ENCODE measurements at regions of chr12 and their contacts with region 1.

Region 1: DNA sequence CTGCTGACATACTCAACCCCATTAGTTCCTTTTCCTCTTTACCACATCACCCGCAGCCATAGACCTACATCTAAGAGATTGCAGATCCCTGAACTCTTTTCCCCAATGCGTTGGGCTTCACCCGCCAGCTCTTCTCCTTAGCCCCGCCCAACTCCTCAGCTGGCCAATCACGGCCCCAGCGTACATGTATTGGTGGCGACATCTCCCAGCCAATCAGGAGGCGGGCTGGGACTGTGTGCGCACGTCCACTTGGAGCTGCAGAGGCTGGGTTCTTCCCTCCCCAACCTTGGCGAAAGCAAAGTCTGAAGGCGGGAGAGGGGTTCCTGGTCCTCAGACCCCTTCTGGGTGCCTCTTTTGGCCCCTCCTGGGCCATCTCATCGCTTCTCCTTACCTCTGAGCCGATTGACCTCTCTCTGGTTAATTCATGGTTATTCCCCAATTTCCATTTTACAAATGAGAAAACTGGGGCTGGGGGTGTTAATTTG is 11.0 kb downstream of the PDE1B start:
- DNase-seq: peak; percentile 78
- ATAC-seq: peak; percentile 100
- H3K4me3 Mint-ChIP-seq: peak overlapping the region; percentile 86
- H3K27ac Mint-ChIP-seq: peak overlapping the region; percentile 91
- H3K4me1 Mint-ChIP-seq: peaks cover 32% of the 10 kb centered on the region
- H3K27me3 Mint-ChIP-seq: no peaks in the 10 kb centered on the region

Region 2: DNA sequence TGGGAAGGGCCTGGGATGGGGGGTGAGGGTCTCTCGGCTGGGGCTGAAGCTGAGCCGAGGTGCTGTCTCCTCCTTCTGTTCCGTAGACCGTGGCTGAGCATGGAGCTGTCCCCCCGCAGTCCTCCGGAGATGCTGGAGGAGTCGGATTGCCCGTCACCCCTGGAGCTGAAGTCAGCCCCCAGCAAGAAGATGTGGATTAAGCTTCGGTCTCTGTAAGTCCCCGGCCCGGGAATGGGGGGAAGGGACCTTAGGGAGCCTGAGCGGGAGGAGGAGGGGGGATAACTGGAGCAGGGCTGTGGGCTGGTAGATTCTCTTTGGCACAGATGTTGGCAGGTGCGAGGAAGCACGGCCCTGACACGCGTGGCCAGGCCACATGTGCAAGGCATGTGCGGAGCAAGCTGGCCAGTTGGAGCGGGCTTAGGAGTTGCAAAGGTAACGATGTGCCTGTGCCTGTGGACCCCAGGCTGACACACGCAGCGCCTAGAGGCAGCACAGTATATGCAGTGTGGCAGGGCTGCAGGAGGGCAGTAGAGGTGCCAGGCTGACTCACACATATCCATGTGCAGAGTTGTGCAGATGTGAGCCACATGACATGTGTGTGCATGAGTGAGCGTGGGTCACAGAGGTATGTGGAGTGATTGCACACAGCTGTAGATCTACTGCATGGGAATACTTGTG is 10.5 kb before region 1 on chr12:
- POLR2A ChIA-PET with region 1: interaction called, 26 read pairs
- DNase-seq: peak; percentile 43
- ATAC-seq: peak; percentile 32
- H3K4me3 Mint-ChIP-seq: peak overlapping the region; percentile 83
- H3K27ac Mint-ChIP-seq: no peak overlapping the region
- H3K4me1 Mint-ChIP-seq: peaks cover 15% of the 10 kb centered on the region
- H3K27me3 Mint-ChIP-seq: peaks cover 12% of the 10 kb centered on the region

Region 3: DNA sequence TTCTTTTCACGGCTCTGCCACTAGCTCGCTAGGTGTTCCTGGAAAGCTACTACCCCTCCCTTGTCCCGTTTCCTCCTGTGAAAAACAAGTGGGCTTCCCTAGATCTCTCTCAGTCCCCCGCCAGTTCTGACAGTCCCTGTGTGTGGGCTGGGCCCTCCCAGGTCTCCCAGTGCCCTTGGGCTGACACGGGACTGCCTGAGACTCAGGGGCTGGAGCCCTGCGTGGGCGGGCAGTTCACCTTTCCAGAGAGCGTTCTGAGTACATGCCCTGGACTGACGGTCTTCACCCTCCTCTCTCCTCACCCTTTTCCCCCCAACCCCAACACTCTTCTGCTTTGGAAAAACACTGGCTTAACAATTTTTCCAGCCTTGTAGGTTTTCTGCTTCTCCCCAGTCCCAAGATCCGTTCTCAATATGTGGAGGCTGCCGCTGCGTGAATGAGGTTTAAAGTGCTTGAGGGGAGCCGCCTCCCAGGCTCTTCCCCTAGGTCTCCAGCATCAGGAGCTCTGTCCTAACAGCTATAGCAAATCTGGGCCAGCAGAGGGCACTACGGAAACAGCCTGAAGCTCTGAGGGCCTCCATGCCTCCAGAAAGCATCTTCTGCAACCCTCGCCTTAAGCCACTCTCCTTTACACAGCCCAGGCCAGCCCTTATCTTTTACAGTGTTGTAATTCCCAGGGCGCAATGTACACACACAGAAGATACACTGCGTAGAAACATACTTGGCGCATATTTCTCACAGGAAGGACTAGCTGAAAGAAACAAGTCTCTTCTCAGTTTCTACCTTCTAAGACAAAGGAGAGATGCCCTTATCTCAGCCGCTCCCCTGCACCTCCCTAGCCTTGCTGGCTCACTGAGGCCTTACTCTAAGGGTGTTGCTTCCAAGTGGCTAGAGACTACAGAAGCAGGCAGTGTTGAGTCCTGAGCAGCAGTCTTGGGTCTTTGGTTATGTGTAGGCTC is 98.2 kb after region 1 on chr12:
- POLR2A ChIA-PET with region 1: no interaction called
- DNase-seq: peak; percentile 35
- ATAC-seq: peak; percentile 65
- H3K4me3 Mint-ChIP-seq: no peak overlapping the region
- H3K27ac Mint-ChIP-seq: no peak overlapping the region
- H3K4me1 Mint-ChIP-seq: no peaks in the 10 kb centered on the region
- H3K27me3 Mint-ChIP-seq: peaks cover 17% of the 10 kb centered on the region

Measured in activated naive CD8-positive, alpha-beta T cell treated with anti-CD3 and anti-CD28 coated beads, Interleukin-2, amount 10 ng/mL, durations not matched to agents 7 days and 5 days (primary cell).